MCF 10A (cell line): ENCODE measurements at regions of chr13 and their contacts with region 1.

Region 1: GRCh38 chr13:27826379-27827353 is 34.4 kb downstream of the GSX1 start:
- DNase-seq: peak; percentile 87
- H3K4me3 Mint-ChIP-seq: peak overlapping the region; percentile 66
- H3K27ac Mint-ChIP-seq: peak overlapping the region; percentile 66
- H3K4me1 Mint-ChIP-seq: peaks cover 21% of the 10 kb centered on the region
- H3K27me3 Mint-ChIP-seq: peaks cover 29% of the 10 kb centered on the region
- CTCF ChIP-seq: peak; percentile 95

Region 2: DNA sequence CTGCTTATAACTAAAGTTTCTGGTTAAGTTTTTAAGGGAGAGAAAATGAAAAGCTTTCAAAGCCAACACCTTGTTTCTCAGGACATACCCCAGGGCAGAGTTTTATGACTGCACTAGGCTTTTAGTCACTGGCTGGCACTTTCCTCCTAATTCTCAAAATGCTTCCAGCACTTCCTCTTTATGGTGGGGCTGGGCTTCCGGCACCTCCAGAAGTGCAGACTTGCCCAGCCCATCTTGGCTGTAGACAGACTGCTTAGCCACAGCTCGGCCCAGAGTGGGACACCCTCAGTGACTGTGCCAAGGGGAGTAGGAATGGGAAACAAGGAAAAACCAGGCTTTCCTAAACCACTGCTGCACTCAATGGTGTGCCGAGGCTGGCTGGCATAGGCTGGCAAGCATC is 425.5 kb before region 1 on chr13:
- CTCF ChIA-PET with region 1: interaction called, 26 read pairs
- POLR2A ChIA-PET with region 1: interaction called, 6 read pairs
- intact Hi-C with region 1: loop called (anchors 1 kb)
- DNase-seq: peak; percentile 14
- H3K4me3 Mint-ChIP-seq: no peak overlapping the region
- H3K27ac Mint-ChIP-seq: no peak overlapping the region
- H3K4me1 Mint-ChIP-seq: no peaks in the 10 kb centered on the region
- H3K27me3 Mint-ChIP-seq: no peaks in the 10 kb centered on the region
- CTCF ChIP-seq: no peak

Region 3: GRCh38 chr13:27481766-27482165 is 344.9 kb before region 1 on chr13:
- CTCF ChIA-PET with region 1: interaction called, 11 read pairs
- POLR2A ChIA-PET with region 1: no interaction called
- intact Hi-C with region 1: loop called (anchors 1 kb)
- DNase-seq: peak; percentile 46
- H3K4me3 Mint-ChIP-seq: no peak overlapping the region
- H3K27ac Mint-ChIP-seq: no peak overlapping the region
- H3K4me1 Mint-ChIP-seq: peaks cover 10% of the 10 kb centered on the region
- H3K27me3 Mint-ChIP-seq: no peaks in the 10 kb centered on the region
- CTCF ChIP-seq: peak; percentile 54

Region 4: GRCh38 chr13:27665333-27665732 is 161.3 kb before region 1 on chr13:
- CTCF ChIA-PET with region 1: interaction called, 16 read pairs
- POLR2A ChIA-PET with region 1: no interaction called
- intact Hi-C with region 1: loop called (anchors 1 kb)
- DNase-seq: no peak
- H3K4me3 Mint-ChIP-seq: no peak overlapping the region
- H3K27ac Mint-ChIP-seq: no peak overlapping the region
- H3K4me1 Mint-ChIP-seq: no peaks in the 10 kb centered on the region
- H3K27me3 Mint-ChIP-seq: no peaks in the 10 kb centered on the region
- CTCF ChIP-seq: peak; percentile 31

Region 5: GRCh38 chr13:27696731-27697130 is 129.9 kb before region 1 on chr13:
- CTCF ChIA-PET with region 1: no interaction called
- POLR2A ChIA-PET with region 1: no interaction called
- intact Hi-C with region 1: no loop called
- DNase-seq: no peak
- H3K4me3 Mint-ChIP-seq: no peak overlapping the region
- H3K27ac Mint-ChIP-seq: no peak overlapping the region
- H3K4me1 Mint-ChIP-seq: no peaks in the 10 kb centered on the region
- H3K27me3 Mint-ChIP-seq: peaks cover 59% of the 10 kb centered on the region
- CTCF ChIP-seq: no peak

Region 6: GRCh38 chr13:27839809-27840467 is 13.3 kb after region 1 on chr13:
- CTCF ChIA-PET with region 1: interaction called, 124 read pairs
- POLR2A ChIA-PET with region 1: interaction called, 3 read pairs
- intact Hi-C with region 1: no loop called
- DNase-seq: peak; percentile 63
- H3K4me3 Mint-ChIP-seq: no peak overlapping the region
- H3K27ac Mint-ChIP-seq: peak overlapping the region; percentile 72
- H3K4me1 Mint-ChIP-seq: peaks cover 7% of the 10 kb centered on the region
- H3K27me3 Mint-ChIP-seq: no peaks in the 10 kb centered on the region
- CTCF ChIP-seq: no peak

Region 7: GRCh38 chr13:27965740-27966640 is 139.3 kb after region 1 on chr13:
- CTCF ChIA-PET with region 1: interaction called, 21 read pairs
- POLR2A ChIA-PET with region 1: no interaction called
- intact Hi-C with region 1: no loop called
- DNase-seq: no peak
- H3K4me3 Mint-ChIP-seq: no peak overlapping the region
- H3K27ac Mint-ChIP-seq: no peak overlapping the region
- H3K4me1 Mint-ChIP-seq: no peaks in the 10 kb centered on the region
- H3K27me3 Mint-ChIP-seq: peaks cover 41% of the 10 kb centered on the region
- CTCF ChIP-seq: no peak